ENCODE measurements at regions of chr17 and their contacts with region 1.

Region 1: GRCh38 chr17:10119203-10120108 is 79.0 kb downstream of the GAS7 start:
- DNase-seq: peak; percentile 77
- H3K4me3 ChIP-seq: no peak overlapping the region
- H3K27ac ChIP-seq: peak overlapping the region; percentile 2 to 35 (median 22)
- H3K4me1 ChIP-seq: peaks cover 6 to 36% (median 16%) of the 10 kb centered on the region in 4 donors
- H3K27me3 ChIP-seq: no peaks in the 10 kb centered on the region
- CTCF ChIP-seq: no peak
- EP300 ChIP-seq: no peak
- POLR2A ChIP-seq: no peak

Region 2: DNA sequence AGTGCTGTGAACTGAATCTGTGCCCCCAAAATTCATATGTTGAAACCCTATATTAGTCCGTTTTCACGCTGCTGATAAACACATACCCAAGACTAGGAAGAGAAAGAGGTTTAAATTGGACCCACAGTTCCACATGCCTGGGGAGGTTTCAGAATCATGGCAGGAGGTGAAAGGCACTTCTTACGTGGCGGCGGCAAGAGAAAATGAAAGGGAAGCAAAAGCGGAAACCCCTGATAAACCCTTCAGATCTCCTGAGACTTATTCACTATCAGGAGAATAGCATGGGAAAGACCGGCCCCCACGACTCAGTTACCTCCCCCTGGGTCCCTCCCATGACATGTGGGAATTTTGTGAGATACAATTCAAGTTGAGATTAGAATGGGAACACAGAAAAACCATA is 1357.4 kb before region 1 on chr17:
- in situ Hi-C with region 1: no loop called
- intact Hi-C with region 1: loop called (anchors 5 kb)
- DNase-seq: no peak
- H3K4me3 ChIP-seq: no peak overlapping the region
- H3K27ac ChIP-seq: no peak overlapping the region
- H3K4me1 ChIP-seq: no peaks in the 10 kb centered on the region
- H3K27me3 ChIP-seq: no peaks in the 10 kb centered on the region
- CTCF ChIP-seq: no peak
- EP300 ChIP-seq: no peak
- POLR2A ChIP-seq: no peak

Region 3: GRCh38 chr17:10241781-10242180 is 122.3 kb after region 1 on chr17:
- in situ Hi-C with region 1: no loop called
- intact Hi-C with region 1: no loop called
- DNase-seq: no peak
- H3K4me3 ChIP-seq: no peak overlapping the region
- H3K27ac ChIP-seq: no peak overlapping the region
- H3K4me1 ChIP-seq: no peaks in the 10 kb centered on the region
- H3K27me3 ChIP-seq: no peaks in the 10 kb centered on the region
- CTCF ChIP-seq: no peak
- EP300 ChIP-seq: no peak
- POLR2A ChIP-seq: no peak

Measured in transverse colon (tissue), 4 donors.